WTC11 (cell line): ENCODE measurements at regions of chr21 and their contacts with region 1.

Region 1: DNA sequence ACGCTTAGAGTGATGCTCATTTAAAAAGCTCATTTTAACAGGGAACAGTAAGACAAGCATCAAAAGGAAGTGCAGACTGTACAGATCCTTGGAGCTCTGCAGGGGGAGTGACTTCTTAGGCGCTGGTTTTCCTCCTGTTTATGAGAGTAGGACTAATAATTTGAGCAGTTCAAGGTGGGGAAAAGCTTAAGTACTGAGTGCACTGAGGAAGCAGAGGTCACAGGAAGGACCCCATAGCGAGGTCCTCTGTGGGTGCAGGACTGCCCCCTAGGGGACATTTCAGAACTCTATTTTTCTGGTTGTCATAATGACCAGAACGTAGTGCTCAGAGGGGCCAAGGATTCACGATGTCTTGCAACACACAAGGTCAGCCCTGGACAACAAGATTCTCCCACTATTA is 112.1 kb downstream of the HLCS start:
- DNase-seq: peak; percentile 69
- ATAC-seq: peak; percentile 95
- H3K4me3 Mint-ChIP-seq: no peak overlapping the region
- H3K27ac Mint-ChIP-seq: no peak overlapping the region
- H3K4me1 Mint-ChIP-seq: peaks cover 8% of the 10 kb centered on the region
- H3K27me3 Mint-ChIP-seq: no peaks in the 10 kb centered on the region; the same call in 1 of the 2 replicates
- CTCF ChIP-seq: peak; percentile 67

Region 2: GRCh38 chr21:36709030-36709867 is 145.1 kb before region 1 on chr21:
- CTCF ChIA-PET with region 1: interaction called, 20 read pairs
- POLR2A ChIA-PET with region 1: no interaction called
- DNase-seq: peak; percentile 36
- ATAC-seq: peak; percentile 2; the same call in 1 of the 2 replicates
- H3K4me3 Mint-ChIP-seq: peak overlapping the region; percentile 69
- H3K27ac Mint-ChIP-seq: no peak overlapping the region
- H3K4me1 Mint-ChIP-seq: peaks cover 55% of the 10 kb centered on the region
- H3K27me3 Mint-ChIP-seq: peaks cover 100% of the 10 kb centered on the region
- CTCF ChIP-seq: no peak

Region 3: DNA sequence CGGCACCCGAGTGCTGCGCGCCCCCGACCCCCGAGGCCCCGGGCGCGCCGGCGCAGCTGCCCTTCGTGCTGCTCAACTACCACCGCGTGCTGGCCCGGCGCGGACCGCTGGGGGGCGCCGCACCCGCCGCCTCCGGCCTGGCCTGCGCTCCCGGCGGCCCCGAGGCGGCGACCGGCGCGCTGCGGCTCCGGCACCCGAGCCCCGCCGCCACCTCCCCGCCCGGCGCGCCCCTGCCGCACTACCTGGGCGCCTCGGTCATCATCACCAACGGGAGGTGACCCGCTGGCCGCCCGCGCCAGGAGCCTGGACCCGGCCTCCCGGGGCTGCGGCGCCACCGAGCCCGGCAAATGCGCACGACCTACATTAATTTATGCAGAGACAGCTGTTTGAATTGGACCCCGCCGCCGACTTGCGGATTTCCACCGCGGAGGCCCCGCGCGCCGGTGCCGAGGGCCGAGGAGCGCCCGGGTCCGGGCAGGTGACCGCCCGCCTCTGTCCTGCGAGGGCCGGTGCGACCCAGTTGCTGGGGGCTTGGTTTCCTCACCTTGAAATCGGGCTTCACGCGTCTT is 106.5 kb before region 1 on chr21:
- CTCF ChIA-PET with region 1: interaction called, 31 read pairs
- POLR2A ChIA-PET with region 1: interaction called, 8 read pairs
- DNase-seq: peak; percentile 82
- ATAC-seq: peak; percentile 61
- H3K4me3 Mint-ChIP-seq: peak overlapping the region; percentile 70
- H3K27ac Mint-ChIP-seq: no peak overlapping the region
- H3K4me1 Mint-ChIP-seq: peaks cover 52% of the 10 kb centered on the region
- H3K27me3 Mint-ChIP-seq: peaks cover 37% of the 10 kb centered on the region
- CTCF ChIP-seq: no peak

Region 4: GRCh38 chr21:36756527-36756926 is 97.9 kb before region 1 on chr21:
- CTCF ChIA-PET with region 1: interaction called, 23 read pairs
- POLR2A ChIA-PET with region 1: no interaction called
- DNase-seq: no peak
- ATAC-seq: no peak
- H3K4me3 Mint-ChIP-seq: no peak overlapping the region
- H3K27ac Mint-ChIP-seq: no peak overlapping the region
- H3K4me1 Mint-ChIP-seq: peaks cover 24% of the 10 kb centered on the region
- H3K27me3 Mint-ChIP-seq: no peaks in the 10 kb centered on the region
- CTCF ChIP-seq: no peak